Activated naive CD4-positive, alpha-beta T cell treated with anti-CD3 and anti-CD28 coated beads for 36 hours (primary cell): ENCODE measurements at regions of chr5 and their contacts with region 1.

Region 1: DNA sequence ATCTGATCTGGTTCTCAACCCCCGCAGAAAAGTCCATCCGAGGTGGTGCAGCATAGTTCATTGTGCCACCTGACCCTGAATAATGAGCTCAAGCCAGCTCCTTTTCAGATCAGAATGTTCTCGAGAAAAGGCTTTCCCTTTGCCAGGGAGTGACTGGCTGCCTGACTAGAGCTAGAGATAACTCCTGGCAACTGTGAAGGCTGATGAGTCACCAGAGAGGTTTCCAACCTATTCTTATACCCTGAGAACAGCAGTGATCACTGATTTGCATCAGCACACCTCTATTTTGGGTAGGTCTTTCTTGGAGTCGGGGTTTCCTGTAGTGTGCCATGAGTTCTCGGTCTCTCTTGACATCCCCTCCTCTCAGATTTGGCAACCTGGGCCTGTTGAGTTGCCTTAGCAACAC is 127.9 kb downstream of the PIK3R1 start:
- DNase-seq: peak; percentile 57
- H3K4me3 Mint-ChIP-seq: no peak overlapping the region
- H3K27ac Mint-ChIP-seq: no peak overlapping the region
- H3K4me1 Mint-ChIP-seq: peaks cover 25% of the 10 kb centered on the region
- H3K27me3 Mint-ChIP-seq: no peaks in the 10 kb centered on the region

Region 2: DNA sequence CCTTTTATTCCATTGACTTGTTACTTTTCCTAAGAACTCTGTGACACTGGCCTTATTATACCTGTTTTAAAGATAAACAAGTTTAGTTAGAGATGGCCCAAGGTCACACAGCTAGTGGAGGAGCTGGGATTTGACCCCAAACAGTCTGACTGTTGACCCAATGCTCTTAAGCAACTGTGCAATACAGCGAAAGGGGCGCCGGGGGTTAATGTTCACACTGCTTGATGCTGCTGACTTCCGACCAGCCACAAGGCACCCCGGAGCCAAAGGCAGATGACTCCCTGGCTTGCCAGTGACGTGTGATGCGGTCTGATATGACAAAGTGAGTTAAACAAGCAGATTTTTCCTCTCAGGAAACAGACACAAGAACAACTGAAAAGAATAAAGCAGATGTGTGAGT is 103.9 kb before region 1 on chr5:
- CTCF ChIA-PET with region 1: no interaction called
- intact Hi-C with region 1: no loop called
- DNase-seq: peak; percentile 93
- H3K4me3 Mint-ChIP-seq: peak overlapping the region; percentile 36
- H3K27ac Mint-ChIP-seq: peak overlapping the region; percentile 72
- H3K4me1 Mint-ChIP-seq: peaks cover 80% of the 10 kb centered on the region
- H3K27me3 Mint-ChIP-seq: no peaks in the 10 kb centered on the region

Region 3: GRCh38 chr5:68272289-68272688 is 71.1 kb before region 1 on chr5:
- CTCF ChIA-PET with region 1: no interaction called
- intact Hi-C with region 1: no loop called
- DNase-seq: no peak
- H3K4me3 Mint-ChIP-seq: no peak overlapping the region
- H3K27ac Mint-ChIP-seq: peak overlapping the region; percentile 36
- H3K4me1 Mint-ChIP-seq: peaks cover 82% of the 10 kb centered on the region
- H3K27me3 Mint-ChIP-seq: no peaks in the 10 kb centered on the region

Region 4: DNA sequence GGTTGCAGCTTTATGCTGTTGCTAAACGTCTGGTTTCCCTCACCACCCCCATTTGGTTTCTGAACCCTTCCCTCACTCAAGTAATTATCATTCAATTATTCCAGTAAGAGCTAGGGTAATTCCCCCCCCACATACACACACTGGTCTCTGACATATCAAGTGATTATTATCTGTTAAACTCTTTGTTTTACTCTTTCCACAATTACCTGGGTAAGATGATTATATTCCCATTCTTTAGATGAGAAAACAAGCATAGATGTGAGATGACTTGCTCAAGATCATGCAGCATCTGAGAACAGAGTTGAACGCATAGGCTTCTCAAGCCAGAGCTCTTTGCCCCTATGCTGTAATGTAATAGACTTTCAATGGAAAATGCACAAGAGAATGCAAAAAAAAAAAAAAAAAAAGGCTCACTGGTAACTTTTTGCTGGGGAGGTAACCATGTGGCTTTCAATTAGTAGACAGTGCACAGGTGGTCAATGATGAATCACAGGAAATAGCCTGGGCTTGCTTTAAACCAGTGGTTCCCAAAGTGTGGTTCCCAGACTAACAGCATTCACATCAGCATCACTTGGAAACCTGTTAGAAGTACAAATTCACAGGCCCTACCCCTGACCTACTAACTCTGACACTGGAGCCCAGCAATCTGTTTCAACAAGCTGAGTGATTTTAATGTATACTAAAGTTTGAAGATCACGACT is 40.2 kb before region 1 on chr5:
- CTCF ChIA-PET with region 1: interaction called, 4 read pairs
- intact Hi-C with region 1: loop called (anchors 5 kb)
- DNase-seq: no peak
- H3K4me3 Mint-ChIP-seq: no peak overlapping the region
- H3K27ac Mint-ChIP-seq: peak overlapping the region; percentile 51
- H3K4me1 Mint-ChIP-seq: peaks cover 30% of the 10 kb centered on the region
- H3K27me3 Mint-ChIP-seq: no peaks in the 10 kb centered on the region

Region 5: DNA sequence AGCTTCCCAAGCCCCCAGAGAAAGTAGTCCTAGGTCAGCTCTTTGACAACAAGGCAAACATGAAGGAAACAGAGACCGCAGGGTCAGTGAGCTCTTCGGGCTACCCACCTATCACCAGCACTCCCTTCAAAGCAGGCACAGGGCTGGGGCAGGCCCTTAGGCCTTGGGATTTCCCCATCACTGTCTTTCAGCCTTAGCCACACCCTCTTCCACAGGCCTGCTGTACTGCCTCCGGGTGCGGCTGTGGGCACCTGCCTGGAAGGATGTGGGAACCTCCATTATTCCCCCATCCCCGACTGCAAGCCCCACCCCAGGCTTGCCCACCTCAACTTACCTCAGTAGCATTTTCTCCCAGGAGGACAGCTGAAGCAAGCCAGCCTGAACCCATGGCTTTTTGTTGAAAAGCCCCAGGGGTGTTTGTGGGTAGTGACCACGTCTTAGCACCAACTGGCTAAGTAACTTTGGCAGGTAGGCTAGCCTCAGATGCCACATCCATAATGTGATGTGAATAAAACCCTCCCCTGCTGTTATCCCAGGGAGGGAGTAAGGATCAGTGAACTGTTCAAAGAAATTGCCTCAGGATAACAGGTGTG is 27.6 kb before region 1 on chr5:
- CTCF ChIA-PET with region 1: no interaction called
- intact Hi-C with region 1: loop called (anchors 2 kb)
- DNase-seq: peak; percentile 69
- H3K4me3 Mint-ChIP-seq: no peak overlapping the region
- H3K27ac Mint-ChIP-seq: no peak overlapping the region
- H3K4me1 Mint-ChIP-seq: peaks cover 11% of the 10 kb centered on the region
- H3K27me3 Mint-ChIP-seq: peaks cover 2% of the 10 kb centered on the region

Region 6: GRCh38 chr5:68369457-68370125 is 26.2 kb after region 1 on chr5:
- CTCF ChIA-PET with region 1: no interaction called
- intact Hi-C with region 1: loop called (anchors 2 kb)
- DNase-seq: peak; percentile 73
- H3K4me3 Mint-ChIP-seq: no peak overlapping the region
- H3K27ac Mint-ChIP-seq: peak overlapping the region; percentile 19
- H3K4me1 Mint-ChIP-seq: peaks cover 36% of the 10 kb centered on the region
- H3K27me3 Mint-ChIP-seq: no peaks in the 10 kb centered on the region

Region 7: DNA sequence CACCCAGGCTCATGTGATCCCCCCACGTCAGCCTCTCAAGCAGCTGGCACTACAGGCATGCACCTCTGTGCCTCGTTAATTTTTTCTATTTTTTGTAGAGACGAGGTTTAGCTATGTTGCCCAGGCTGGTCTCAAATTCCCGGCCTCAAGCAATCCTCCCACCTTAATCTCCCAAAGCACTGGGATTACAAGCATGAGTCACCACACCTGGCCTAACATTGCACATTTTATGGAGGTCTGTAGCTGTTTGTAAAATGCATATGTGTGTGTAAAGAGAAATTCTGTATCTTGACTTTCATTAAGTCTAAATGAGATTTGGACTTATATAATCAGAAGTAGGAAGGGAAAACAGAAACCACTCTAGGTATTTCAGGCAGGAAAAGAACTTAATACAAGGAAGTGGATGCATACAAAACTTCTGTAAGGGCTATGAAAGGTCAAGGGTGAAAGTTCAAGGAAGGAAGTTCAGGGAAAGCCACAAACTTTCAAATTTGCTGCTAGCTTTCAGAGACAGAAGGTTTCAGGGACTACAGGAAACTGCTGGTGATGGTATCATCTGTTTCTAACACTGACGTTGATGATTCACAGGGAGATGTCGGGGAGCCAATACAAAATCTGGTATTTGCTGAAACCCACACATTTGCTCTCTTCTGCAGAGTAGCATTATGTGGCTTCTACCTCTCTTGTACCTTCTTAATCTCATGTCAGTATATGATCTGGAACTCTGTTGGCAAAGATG is 81.5 kb after region 1 on chr5:
- CTCF ChIA-PET with region 1: no interaction called
- intact Hi-C with region 1: loop called (anchors 2 kb)
- DNase-seq: peak; percentile 49
- H3K4me3 Mint-ChIP-seq: no peak overlapping the region
- H3K27ac Mint-ChIP-seq: no peak overlapping the region
- H3K4me1 Mint-ChIP-seq: peaks cover 38% of the 10 kb centered on the region
- H3K27me3 Mint-ChIP-seq: no peaks in the 10 kb centered on the region

Region 8: GRCh38 chr5:69074664-69075521 is 731.5 kb after region 1 on chr5:
- CTCF ChIA-PET with region 1: no interaction called
- intact Hi-C with region 1: no loop called
- DNase-seq: no peak
- H3K4me3 Mint-ChIP-seq: no peak overlapping the region
- H3K27ac Mint-ChIP-seq: no peak overlapping the region
- H3K4me1 Mint-ChIP-seq: no peaks in the 10 kb centered on the region
- H3K27me3 Mint-ChIP-seq: no peaks in the 10 kb centered on the region